Left lung (tissue), 14 donors: ENCODE measurements at regions of chr15 and their contacts with region 1.

Region 1: GRCh38 chr15:81265944-81266775 is 57.8 kb downstream of the STARD5 start:
- DNase-seq: peak; percentile 78 to 89 (median 84)
- ATAC-seq: peak; percentile 97
- H3K4me3 ChIP-seq: no peak overlapping the region
- H3K27ac ChIP-seq: no peak overlapping the region
- H3K4me1 ChIP-seq: peaks cover 8 to 15% of the 10 kb centered on the region in 2 donors
- H3K27me3 ChIP-seq: peaks cover 0 to 6% of the 10 kb centered on the region in 2 donors
- CTCF ChIP-seq: peak; percentile 73 to 77

Region 2: GRCh38 chr15:80989518-80990478 is 276.4 kb before region 1 on chr15 and contains the start of gene MESD:
- intact Hi-C with region 1: loop called in 1 of 2 experiments (anchors 10 kb)
- DNase-seq: peak; percentile 95 to 100 (median 98)
- ATAC-seq: peak; percentile 99
- H3K4me3 ChIP-seq: peak within 1 kb of the TSS; percentile 63 to 92
- H3K27ac ChIP-seq: peak within 1 kb of the TSS; percentile 91 to 93
- H3K4me1 ChIP-seq: peaks cover 17 to 70% of the 10 kb centered on the region in 2 donors
- H3K27me3 ChIP-seq: no peaks in the 10 kb centered on the region
- CTCF ChIP-seq: no peak
- polyA plus RNA-seq, gene MESD: 40.0 to 44.1 (median 43.0) TPM

Region 3: DNA sequence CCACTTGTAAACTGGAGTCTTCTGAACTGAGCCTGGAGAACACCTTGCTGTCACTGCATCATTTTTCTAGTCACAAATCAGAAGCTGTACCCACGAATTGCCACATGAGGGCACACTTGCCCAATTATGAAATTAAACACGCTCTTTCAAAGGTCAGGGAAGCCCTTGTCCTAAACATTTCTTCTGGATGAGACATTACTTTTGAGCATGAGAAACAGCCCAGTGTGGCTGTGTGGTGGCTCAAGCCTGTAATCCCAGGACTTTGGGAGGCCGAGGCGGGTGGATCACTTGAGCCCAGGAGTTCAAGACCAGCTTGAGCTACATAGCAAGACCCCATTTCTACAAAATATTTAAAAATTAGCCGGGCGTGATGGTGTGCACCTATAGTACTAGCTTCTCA is 159.6 kb before region 1 on chr15:
- intact Hi-C with region 1: loop called (anchors 5 to 10 kb)
- DNase-seq: peak in 2 of 4 donors; percentile 46 to 66
- ATAC-seq: peak; percentile 94
- H3K4me3 ChIP-seq: no peak overlapping the region
- H3K27ac ChIP-seq: no peak overlapping the region
- H3K4me1 ChIP-seq: peaks cover 0 to 24% of the 10 kb centered on the region in 2 donors
- H3K27me3 ChIP-seq: no peaks in the 10 kb centered on the region
- CTCF ChIP-seq: peak; percentile 64 to 71